ENCODE measurements at regions of chr1 and their contacts with region 1.

Region 1: GRCh38 chr1:205977402-205978014 is 25.7 kb downstream of the RAB7B start:
- DNase-seq: no peak
- H3K4me3 ChIP-seq: no peak overlapping the region
- H3K27me3 ChIP-seq: no peaks in the 10 kb centered on the region
- CTCF ChIP-seq: peak; percentile 96

Region 2: DNA sequence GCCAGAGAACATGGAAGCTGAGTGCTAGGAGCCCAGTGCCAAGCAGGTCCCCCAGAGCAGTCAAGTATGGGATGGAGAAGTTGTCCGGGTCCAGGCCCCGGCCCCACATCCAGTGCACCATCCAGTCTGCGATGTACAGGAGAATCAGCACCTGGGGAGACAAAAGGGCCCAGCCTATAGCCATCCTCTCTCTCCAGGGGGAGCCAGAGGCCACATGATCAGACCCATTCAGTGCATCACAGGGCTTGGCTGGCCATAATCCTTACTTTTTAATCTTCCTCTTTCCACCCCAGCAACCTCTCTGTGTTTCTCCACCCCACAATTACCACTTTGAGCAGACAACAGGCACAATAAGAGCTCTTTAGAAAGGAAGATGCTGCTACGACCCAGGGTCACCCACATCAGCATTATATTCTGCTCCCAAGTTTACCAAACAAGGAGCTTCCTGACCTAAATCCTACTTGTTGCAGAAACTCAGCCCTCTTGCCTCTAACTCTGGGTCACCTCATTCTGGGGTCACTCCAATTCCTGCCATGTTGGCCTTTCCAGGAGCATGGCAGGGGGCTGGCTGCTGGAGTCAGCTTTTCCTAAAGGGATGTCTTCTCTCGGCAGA is 185.8 kb before region 1 on chr1:
- CTCF ChIA-PET with region 1: interaction called, 172 read pairs
- POLR2A ChIA-PET with region 1: interaction called, 7 read pairs
- DNase-seq: no peak
- H3K4me3 ChIP-seq: no peak overlapping the region
- H3K27me3 ChIP-seq: no peaks in the 10 kb centered on the region
- CTCF ChIP-seq: peak; percentile 87

Region 3: GRCh38 chr1:205907794-205908193 is 69.7 kb before region 1 on chr1:
- CTCF ChIA-PET with region 1: interaction called, 514 read pairs
- POLR2A ChIA-PET with region 1: no interaction called
- DNase-seq: no peak
- H3K4me3 ChIP-seq: no peak overlapping the region
- H3K27me3 ChIP-seq: no peaks in the 10 kb centered on the region
- CTCF ChIP-seq: peak; percentile 76

Region 4: GRCh38 chr1:205950280-205950679 is 27.2 kb before region 1 on chr1:
- CTCF ChIA-PET with region 1: interaction called, 12 read pairs
- POLR2A ChIA-PET with region 1: no interaction called
- DNase-seq: peak; percentile 39
- H3K4me3 ChIP-seq: no peak overlapping the region
- H3K27me3 ChIP-seq: peaks cover 9% of the 10 kb centered on the region
- CTCF ChIP-seq: no peak

Region 5: GRCh38 chr1:206001476-206001888 is 24.0 kb after region 1 on chr1:
- CTCF ChIA-PET with region 1: interaction called, 12 read pairs
- POLR2A ChIA-PET with region 1: no interaction called
- DNase-seq: peak; percentile 79
- H3K4me3 ChIP-seq: no peak overlapping the region
- H3K27me3 ChIP-seq: no peaks in the 10 kb centered on the region
- CTCF ChIP-seq: no peak